Upper lobe of right lung (tissue), 1 donor: ENCODE measurements at regions of chr1 and their contacts with region 1.

Region 1: DNA sequence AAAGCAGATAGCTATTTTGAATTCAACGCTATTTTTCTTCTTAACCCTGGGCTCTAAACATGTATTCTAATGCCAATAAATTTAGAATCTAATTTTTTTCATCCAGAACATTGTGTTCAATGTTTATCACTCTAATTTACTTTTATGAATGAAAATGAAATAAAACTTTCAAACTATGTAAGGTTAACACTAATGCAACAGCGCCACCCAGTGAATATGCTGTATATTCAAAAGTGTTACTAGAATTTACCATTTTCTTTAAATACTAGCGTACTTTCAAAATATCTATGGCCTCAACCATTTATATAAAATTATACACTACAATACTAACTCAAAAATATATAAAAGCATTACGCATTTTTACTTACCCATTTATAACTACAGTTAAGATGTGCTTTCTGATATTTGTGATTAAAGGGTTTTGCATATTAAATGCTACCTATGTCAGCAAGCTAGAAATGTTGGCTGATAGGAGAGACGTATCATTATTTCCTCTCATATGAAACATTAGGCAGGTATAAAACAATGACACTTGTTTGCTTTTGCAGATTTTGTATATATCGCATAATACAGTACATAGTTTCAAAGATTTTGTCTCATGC is 5.9 kb upstream of the NUF2 start:
- DNase-seq: no peak
- ATAC-seq: no peak
- H3K4me3 ChIP-seq: no peak overlapping the region
- H3K27ac ChIP-seq: no peak overlapping the region
- H3K4me1 ChIP-seq: peaks cover 3% of the 10 kb centered on the region
- H3K27me3 ChIP-seq: no peaks in the 10 kb centered on the region
- CTCF ChIP-seq: peak; percentile 68

Region 2: GRCh38 chr1:162854245-162854882 is 461.5 kb before region 1 on chr1:
- intact Hi-C with region 1: loop called (anchors 10 kb)
- DNase-seq: no peak
- ATAC-seq: peak; percentile 84
- H3K4me3 ChIP-seq: no peak overlapping the region
- H3K27ac ChIP-seq: no peak overlapping the region
- H3K4me1 ChIP-seq: no peaks in the 10 kb centered on the region
- H3K27me3 ChIP-seq: no peaks in the 10 kb centered on the region
- CTCF ChIP-seq: peak; percentile 82

Region 3: GRCh38 chr1:163656095-163656759 is 340.4 kb after region 1 on chr1:
- intact Hi-C with region 1: no loop called
- DNase-seq: no peak
- ATAC-seq: no peak
- H3K4me3 ChIP-seq: no peak overlapping the region
- H3K27ac ChIP-seq: no peak overlapping the region
- H3K4me1 ChIP-seq: no peaks in the 10 kb centered on the region
- H3K27me3 ChIP-seq: no peaks in the 10 kb centered on the region
- CTCF ChIP-seq: no peak